ENCODE measurements at regions of chr5 and their contacts with region 1.

Region 1: GRCh38 chr5:52989781-52990527 is 802 bp downstream of the ITGA2 start:
- DNase-seq: peak; percentile 56
- H3K4me3 Mint-ChIP-seq: peak overlapping the region; percentile 77
- H3K27ac Mint-ChIP-seq: peak overlapping the region; percentile 25
- H3K4me1 Mint-ChIP-seq: peaks cover 48% of the 10 kb centered on the region
- H3K27me3 Mint-ChIP-seq: no peaks in the 10 kb centered on the region
- CTCF ChIP-seq: peak; percentile 42

Region 2: GRCh38 chr5:52787600-52788504 is 202.1 kb before region 1 on chr5 and contains the starts of genes ITGA1 and PELO:
- CTCF ChIA-PET with region 1: no interaction called
- POLR2A ChIA-PET with region 1: no interaction called
- intact Hi-C with region 1: loop called (anchors 10 kb)
- DNase-seq: peak; percentile 83
- H3K4me3 Mint-ChIP-seq: peak within 1 kb of the TSS; percentile 94
- H3K27ac Mint-ChIP-seq: peak within 1 kb of the TSS; percentile 72
- H3K4me1 Mint-ChIP-seq: peaks cover 28% of the 10 kb centered on the region
- H3K27me3 Mint-ChIP-seq: no peaks in the 10 kb centered on the region
- CTCF ChIP-seq: no peak
- total RNA-seq, gene ITGA1: 5.3 and 7.7 TPM in 2 replicates
- total RNA-seq, gene PELO: 22.5 and 23.1 TPM in 2 replicates

Region 3: GRCh38 chr5:52961274-52961681 is 28.7 kb before region 1 on chr5:
- CTCF ChIA-PET with region 1: interaction called, 7 read pairs
- POLR2A ChIA-PET with region 1: interaction called, 14 read pairs
- intact Hi-C with region 1: no loop called
- DNase-seq: peak; percentile 47
- H3K4me3 Mint-ChIP-seq: no peak overlapping the region
- H3K27ac Mint-ChIP-seq: no peak overlapping the region
- H3K4me1 Mint-ChIP-seq: peaks cover 15% of the 10 kb centered on the region
- H3K27me3 Mint-ChIP-seq: no peaks in the 10 kb centered on the region
- CTCF ChIP-seq: no peak

Region 4: DNA sequence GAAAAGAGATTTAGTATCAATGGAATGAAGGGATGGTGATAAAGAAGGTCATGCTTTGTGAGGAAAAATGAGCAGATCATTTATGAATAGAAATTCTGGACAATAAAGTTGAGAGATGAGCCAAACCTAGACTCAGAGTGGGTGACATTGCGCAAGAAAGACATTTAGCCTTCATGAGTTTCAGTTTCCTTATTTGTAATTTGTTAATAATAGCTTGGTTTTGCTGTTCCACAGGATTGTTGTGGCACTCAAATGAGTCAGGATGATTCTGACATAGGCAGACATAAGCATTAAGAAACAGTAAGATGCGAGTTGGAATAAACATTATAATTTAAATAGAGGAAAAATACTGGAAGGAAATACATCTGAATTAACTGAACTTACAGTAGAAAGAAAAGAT is 34.0 kb after region 1 on chr5:
- CTCF ChIA-PET with region 1: interaction called, 11 read pairs
- POLR2A ChIA-PET with region 1: interaction called, 58 read pairs
- intact Hi-C with region 1: no loop called
- DNase-seq: peak; percentile 84
- H3K4me3 Mint-ChIP-seq: no peak overlapping the region
- H3K27ac Mint-ChIP-seq: no peak overlapping the region
- H3K4me1 Mint-ChIP-seq: peaks cover 12% of the 10 kb centered on the region
- H3K27me3 Mint-ChIP-seq: no peaks in the 10 kb centered on the region
- CTCF ChIP-seq: no peak

Region 5: GRCh38 chr5:53041071-53041692 is 51.2 kb after region 1 on chr5:
- CTCF ChIA-PET with region 1: interaction called, 4 read pairs
- POLR2A ChIA-PET with region 1: interaction called, 70 read pairs
- intact Hi-C with region 1: no loop called
- DNase-seq: no peak
- H3K4me3 Mint-ChIP-seq: no peak overlapping the region
- H3K27ac Mint-ChIP-seq: no peak overlapping the region
- H3K4me1 Mint-ChIP-seq: peaks cover 32% of the 10 kb centered on the region
- H3K27me3 Mint-ChIP-seq: no peaks in the 10 kb centered on the region
- CTCF ChIP-seq: no peak

Region 6: DNA sequence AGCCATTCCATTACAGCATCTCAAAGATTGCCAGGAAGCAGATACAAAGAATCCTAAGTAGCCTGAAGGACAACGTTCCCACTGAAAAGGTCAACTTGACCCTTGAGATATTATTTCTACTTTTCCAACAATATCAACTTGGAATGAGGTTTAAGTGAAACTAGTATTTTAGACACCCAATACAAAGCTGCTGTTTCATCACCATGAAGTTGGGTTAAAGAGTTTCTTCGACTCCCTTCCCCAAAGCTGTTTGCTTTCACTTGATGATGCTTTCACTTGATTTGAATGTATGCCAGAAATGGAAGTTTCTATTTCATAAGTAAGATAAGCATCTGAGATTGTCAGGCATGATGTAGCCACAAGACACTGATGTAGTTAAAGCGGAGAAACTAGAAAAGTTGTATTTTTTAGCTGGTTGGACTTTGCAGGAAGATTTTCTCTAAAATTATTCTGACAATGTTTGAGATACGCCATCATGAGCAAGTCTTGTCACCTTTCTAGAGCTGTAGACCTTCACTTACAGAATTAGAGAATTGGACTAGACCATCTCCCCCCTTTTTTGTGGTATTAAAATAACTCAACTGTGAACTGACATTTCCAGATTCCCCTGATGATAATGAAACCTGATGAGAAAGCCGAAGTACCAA is 99.5 kb after region 1 on chr5:
- CTCF ChIA-PET with region 1: interaction called, 18 read pairs
- POLR2A ChIA-PET with region 1: interaction called, 6 read pairs
- intact Hi-C with region 1: no loop called
- DNase-seq: no peak
- H3K4me3 Mint-ChIP-seq: no peak overlapping the region
- H3K27ac Mint-ChIP-seq: no peak overlapping the region
- H3K4me1 Mint-ChIP-seq: peaks cover 7% of the 10 kb centered on the region
- H3K27me3 Mint-ChIP-seq: no peaks in the 10 kb centered on the region
- CTCF ChIP-seq: no peak

Region 7: GRCh38 chr5:53109443-53110127 is 119.6 kb after region 1 on chr5 and contains the start of gene MOCS2:
- CTCF ChIA-PET with region 1: no interaction called
- POLR2A ChIA-PET with region 1: interaction called, 18 read pairs
- intact Hi-C with region 1: no loop called
- DNase-seq: peak; percentile 89
- H3K4me3 Mint-ChIP-seq: peak within 1 kb of the TSS; percentile 97
- H3K27ac Mint-ChIP-seq: peak within 1 kb of the TSS; percentile 80
- H3K4me1 Mint-ChIP-seq: peaks cover 18% of the 10 kb centered on the region
- H3K27me3 Mint-ChIP-seq: no peaks in the 10 kb centered on the region
- CTCF ChIP-seq: no peak
- total RNA-seq, gene MOCS2: 31.4 and 43.0 TPM in 2 replicates